ENCODE measurements at regions of chr22 and their contacts with region 1.

Region 1: DNA sequence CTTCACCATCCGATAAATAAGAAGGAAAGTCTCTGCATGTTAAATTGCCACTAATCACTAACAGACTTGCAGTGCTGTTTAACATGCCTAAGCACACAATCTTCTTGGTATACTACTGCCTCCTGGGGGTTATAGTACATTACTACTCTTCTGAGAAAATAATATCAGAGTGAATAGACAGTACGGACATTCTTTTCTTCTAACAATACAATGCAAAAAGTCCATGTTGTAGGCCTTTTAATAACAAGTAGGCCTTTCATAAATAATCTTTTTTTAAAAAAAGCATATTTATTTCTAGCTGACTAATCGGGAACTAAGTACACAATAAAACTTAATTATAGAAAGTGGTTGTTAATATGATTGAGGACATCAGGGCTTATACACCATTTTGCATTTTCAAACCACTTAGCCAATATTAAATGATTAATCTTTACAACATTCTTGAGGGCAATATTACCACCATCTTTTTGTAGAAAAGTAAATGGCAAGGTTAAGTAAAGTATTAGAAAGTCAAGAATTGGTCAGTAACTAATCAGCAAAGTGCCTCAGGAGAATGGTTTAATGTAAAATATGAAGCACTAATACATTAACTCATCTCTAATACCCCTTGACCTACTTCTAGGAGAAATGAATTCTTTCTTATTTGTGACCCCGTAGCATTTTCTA is 84.7 kb downstream of the TTC28 start:
- DNase-seq: peak in 1 of 2 donors; percentile 60
- ATAC-seq: peak; percentile 67 to 78 (median 68)
- H3K4me3 ChIP-seq: no peak overlapping the region
- H3K4me3 Mint-ChIP-seq: no peak overlapping the region
- H3K27ac ChIP-seq: no peak overlapping the region
- H3K27ac Mint-ChIP-seq: no peak overlapping the region
- H3K4me1 ChIP-seq: no peaks in the 10 kb centered on the region
- H3K4me1 Mint-ChIP-seq: no peaks in the 10 kb centered on the region
- H3K27me3 ChIP-seq: peaks cover 5% of the 10 kb centered on the region
- H3K27me3 Mint-ChIP-seq: peaks cover 0 to 5% of the 10 kb centered on the region in 2 donors
- CTCF ChIP-seq: peak; percentile 81

Region 2: DNA sequence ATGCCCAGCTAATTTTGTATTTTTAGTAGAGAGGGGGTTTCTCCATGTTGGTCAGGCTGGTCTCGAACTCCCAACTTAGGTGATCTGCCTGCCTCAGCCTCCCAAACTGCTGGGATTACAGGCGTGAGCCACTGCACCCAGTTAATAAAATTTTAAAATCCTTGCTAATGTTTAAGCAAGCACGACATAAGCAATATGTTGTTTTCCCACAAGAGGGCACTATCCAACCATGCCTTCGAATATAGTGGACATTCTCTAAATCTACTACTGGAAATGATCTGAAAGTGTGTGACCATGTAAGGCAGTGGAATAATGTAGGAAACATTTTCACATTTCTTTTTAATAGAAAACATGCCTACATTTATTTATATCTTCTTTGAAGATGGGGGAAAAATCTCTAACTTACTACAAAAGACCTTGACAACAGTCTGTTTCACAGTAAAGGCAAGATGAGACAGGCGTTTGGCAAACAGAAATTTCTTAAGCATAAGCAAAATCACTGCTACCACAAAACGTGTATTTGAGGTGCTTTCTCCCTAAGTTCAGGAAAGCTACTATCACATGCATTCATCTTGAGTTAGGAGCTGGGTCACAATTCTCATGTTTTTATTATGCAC is 714.0 kb before region 1 on chr22:
- intact Hi-C with region 1: loop called (anchors 10 kb)
- DNase-seq: peak in 1 of 2 donors; percentile 69
- ATAC-seq: peak; percentile 28 to 62 (median 47)
- H3K4me3 ChIP-seq: no peak overlapping the region
- H3K4me3 Mint-ChIP-seq: no peak overlapping the region
- H3K27ac ChIP-seq: no peak overlapping the region
- H3K27ac Mint-ChIP-seq: no peak overlapping the region
- H3K4me1 ChIP-seq: peaks cover 4% of the 10 kb centered on the region
- H3K4me1 Mint-ChIP-seq: peaks cover 22 to 32% of the 10 kb centered on the region in 2 donors
- H3K27me3 ChIP-seq: no peaks in the 10 kb centered on the region
- H3K27me3 Mint-ChIP-seq: no peaks in the 10 kb centered on the region
- CTCF ChIP-seq: peak; percentile 63

Region 3: DNA sequence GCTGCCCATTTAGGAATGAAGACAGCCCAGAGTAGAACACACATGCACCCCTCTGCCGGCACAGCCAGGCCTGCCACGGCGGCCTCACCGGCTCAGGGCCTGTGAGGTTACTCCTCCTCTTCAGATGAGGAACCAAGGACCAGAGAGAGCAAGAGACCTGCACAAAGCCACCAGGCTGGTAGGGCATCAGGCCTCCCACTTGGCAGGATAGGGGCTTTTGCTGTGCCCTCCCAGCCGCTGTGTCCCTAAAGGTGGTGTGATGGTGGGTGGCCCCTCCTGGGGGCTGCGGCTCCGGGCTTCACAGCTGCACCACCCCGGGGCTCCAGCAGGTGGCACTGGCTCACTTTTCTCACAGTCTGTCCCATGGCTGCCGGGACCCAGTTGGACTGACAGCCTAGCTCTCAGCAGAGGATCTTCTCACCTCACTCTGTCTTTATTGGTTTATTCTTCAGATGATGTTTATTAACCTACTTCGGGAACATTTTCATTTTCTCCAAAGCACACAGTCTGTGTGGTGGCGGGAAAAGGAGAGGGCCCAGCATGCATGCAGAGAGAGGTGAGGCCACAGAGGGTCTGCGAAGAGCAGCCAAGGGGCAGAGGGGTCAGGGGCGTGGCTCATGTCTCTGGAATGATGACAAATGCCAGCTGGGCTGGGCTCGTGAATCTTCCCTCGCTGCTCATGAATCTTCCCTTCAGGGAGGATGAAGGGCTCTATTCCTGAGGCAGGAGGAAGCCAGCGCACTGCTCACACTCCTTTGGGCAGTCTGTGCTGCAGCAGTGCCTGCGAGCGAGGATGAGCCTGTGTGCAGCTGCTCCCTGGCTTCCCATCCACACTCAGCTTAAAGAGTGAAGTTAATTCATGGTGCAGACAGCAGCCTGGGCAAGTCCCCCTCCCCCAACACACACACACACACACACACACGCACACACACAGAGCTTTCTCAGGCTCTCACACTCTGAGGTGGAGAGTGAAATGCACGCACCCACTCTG is 574.8 kb before region 1 on chr22:
- intact Hi-C with region 1: loop called (anchors 1 kb)
- DNase-seq: peak; percentile 52 to 74
- ATAC-seq: peak; percentile 67 to 90 (median 80)
- H3K4me3 ChIP-seq: no peak overlapping the region
- H3K4me3 Mint-ChIP-seq: no peak overlapping the region
- H3K27ac ChIP-seq: no peak overlapping the region
- H3K27ac Mint-ChIP-seq: peak overlapping the region in 1 of 2 donors; percentile 47
- H3K4me1 ChIP-seq: no peaks in the 10 kb centered on the region
- H3K4me1 Mint-ChIP-seq: peaks cover 5 to 6% of the 10 kb centered on the region in 2 donors
- H3K27me3 ChIP-seq: no peaks in the 10 kb centered on the region
- H3K27me3 Mint-ChIP-seq: peaks cover 0 to 3% of the 10 kb centered on the region in 2 donors
- CTCF ChIP-seq: peak; percentile 76

Region 4: DNA sequence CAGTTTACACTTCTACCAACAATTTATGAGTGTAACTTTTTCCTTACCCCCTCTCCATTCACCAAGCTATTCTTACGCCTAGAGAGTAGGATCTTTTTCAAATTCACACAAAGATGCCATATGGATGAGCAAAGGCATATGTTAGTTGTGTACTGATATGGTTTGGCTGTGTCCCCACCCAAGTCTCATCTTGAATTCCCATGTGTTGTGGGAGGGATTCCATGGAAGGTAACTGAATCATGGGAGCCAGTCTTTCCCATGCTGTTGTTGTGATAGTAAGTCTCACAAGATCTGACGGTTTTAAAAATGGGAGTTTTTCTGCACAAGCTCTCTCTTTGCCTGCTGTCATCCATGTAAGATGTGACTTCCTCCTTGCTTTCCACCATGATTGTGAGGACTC is 44.4 kb after region 1 on chr22:
- intact Hi-C with region 1: no loop called
- DNase-seq: no peak
- ATAC-seq: no peak
- H3K4me3 ChIP-seq: no peak overlapping the region
- H3K4me3 Mint-ChIP-seq: no peak overlapping the region
- H3K27ac ChIP-seq: no peak overlapping the region
- H3K27ac Mint-ChIP-seq: no peak overlapping the region
- H3K4me1 ChIP-seq: no peaks in the 10 kb centered on the region
- H3K4me1 Mint-ChIP-seq: no peaks in the 10 kb centered on the region
- H3K27me3 ChIP-seq: peaks cover 8% of the 10 kb centered on the region
- H3K27me3 Mint-ChIP-seq: peaks cover 23 to 25% of the 10 kb centered on the region in 2 donors
- CTCF ChIP-seq: no peak

Region 5: DNA sequence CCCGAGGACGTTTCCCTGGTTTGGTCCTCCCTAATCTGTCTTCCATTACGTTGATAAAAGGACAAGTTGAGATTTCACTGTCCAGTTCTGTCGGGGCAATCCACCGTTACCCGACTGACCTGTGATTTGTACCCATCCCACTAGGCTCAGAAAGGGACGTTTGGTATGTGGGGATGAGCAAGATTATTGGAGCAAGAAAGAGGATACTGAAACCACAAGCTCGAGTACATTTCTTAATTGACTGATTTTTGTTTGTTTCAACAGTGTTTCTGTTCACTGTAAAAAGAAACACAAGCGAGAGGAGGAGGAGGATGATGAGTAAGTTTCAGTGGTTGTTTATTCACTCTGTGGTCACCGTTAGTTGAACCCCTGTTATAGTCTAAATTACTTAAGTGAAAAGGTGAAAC is 178.5 kb after region 1 on chr22:
- intact Hi-C with region 1: no loop called
- DNase-seq: no peak
- ATAC-seq: peak in 1 of 3 donors; percentile 10
- H3K4me3 ChIP-seq: peak overlapping the region; percentile 55
- H3K4me3 Mint-ChIP-seq: peak overlapping the region; percentile 98
- H3K27ac ChIP-seq: peak overlapping the region; percentile 82
- H3K27ac Mint-ChIP-seq: peak overlapping the region; percentile 96
- H3K4me1 ChIP-seq: peaks cover 31% of the 10 kb centered on the region
- H3K4me1 Mint-ChIP-seq: peaks cover 20 to 25% of the 10 kb centered on the region in 2 donors
- H3K27me3 ChIP-seq: no peaks in the 10 kb centered on the region
- H3K27me3 Mint-ChIP-seq: no peaks in the 10 kb centered on the region
- CTCF ChIP-seq: no peak

Region 6: DNA sequence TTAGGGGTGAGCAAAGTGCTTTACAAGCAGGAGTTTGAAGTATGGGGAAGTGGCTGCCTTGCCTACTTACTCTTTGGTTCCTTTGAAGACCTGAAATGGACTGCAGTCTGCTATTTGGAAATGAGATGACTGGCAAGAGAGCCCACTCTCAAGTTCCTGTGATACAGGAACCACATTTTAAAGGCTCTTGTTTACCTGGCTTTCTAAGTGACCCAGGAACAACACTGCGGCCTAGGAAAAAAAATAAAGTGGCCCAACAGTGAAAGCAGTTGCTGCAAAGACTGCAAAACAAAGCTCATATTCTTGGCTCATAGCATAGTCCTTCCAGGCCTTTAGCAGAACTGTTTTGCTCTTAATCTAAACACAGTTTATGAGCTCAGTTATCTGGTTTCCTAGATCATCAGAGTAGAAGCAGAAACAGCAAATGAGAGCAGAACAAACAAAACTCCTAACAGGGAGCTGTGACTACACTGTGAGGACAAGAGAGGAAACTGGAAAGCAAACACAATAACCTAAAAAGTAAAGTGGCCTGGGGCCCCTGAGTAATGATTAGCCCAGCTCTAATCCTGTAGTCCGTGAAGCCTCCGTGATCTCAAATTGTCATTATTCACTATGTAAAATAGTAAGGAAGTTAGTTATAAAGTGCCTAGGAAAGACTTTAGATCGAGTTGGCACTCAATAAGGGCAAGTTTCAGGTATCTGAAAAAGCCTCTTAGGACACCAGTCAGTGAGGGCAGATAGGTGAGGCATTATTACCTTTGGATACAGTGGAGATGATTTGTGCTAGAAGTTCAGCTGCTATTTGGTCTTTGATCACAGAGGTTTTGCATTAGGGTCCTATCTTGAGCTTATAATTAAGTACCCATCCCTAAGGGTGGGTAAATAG is 189.1 kb after region 1 on chr22:
- intact Hi-C with region 1: no loop called
- DNase-seq: no peak
- ATAC-seq: no peak
- H3K4me3 ChIP-seq: no peak overlapping the region
- H3K4me3 Mint-ChIP-seq: no peak overlapping the region
- H3K27ac ChIP-seq: no peak overlapping the region
- H3K27ac Mint-ChIP-seq: peak overlapping the region; percentile 60 to 67
- H3K4me1 ChIP-seq: peaks cover 3% of the 10 kb centered on the region
- H3K4me1 Mint-ChIP-seq: peaks cover 31 to 41% of the 10 kb centered on the region in 2 donors
- H3K27me3 ChIP-seq: no peaks in the 10 kb centered on the region
- H3K27me3 Mint-ChIP-seq: no peaks in the 10 kb centered on the region
- CTCF ChIP-seq: no peak

Measured in natural killer cell (primary cell).